ENCODE measurements at regions of chr22 and their contacts with region 1.

Region 1: GRCh38 chr22:41448189-41448808 is 1.7 kb upstream of the TOB2 start:
- H3K4me3 ChIP-seq: peak overlapping the region; percentile 90
- H3K27ac ChIP-seq: peak overlapping the region; percentile 100
- H3K4me1 ChIP-seq: no peaks in the 10 kb centered on the region
- CTCF ChIP-seq: 0 out of 2 replicates have a peak, but pooled peaks have one; percentile 14

Region 2: DNA sequence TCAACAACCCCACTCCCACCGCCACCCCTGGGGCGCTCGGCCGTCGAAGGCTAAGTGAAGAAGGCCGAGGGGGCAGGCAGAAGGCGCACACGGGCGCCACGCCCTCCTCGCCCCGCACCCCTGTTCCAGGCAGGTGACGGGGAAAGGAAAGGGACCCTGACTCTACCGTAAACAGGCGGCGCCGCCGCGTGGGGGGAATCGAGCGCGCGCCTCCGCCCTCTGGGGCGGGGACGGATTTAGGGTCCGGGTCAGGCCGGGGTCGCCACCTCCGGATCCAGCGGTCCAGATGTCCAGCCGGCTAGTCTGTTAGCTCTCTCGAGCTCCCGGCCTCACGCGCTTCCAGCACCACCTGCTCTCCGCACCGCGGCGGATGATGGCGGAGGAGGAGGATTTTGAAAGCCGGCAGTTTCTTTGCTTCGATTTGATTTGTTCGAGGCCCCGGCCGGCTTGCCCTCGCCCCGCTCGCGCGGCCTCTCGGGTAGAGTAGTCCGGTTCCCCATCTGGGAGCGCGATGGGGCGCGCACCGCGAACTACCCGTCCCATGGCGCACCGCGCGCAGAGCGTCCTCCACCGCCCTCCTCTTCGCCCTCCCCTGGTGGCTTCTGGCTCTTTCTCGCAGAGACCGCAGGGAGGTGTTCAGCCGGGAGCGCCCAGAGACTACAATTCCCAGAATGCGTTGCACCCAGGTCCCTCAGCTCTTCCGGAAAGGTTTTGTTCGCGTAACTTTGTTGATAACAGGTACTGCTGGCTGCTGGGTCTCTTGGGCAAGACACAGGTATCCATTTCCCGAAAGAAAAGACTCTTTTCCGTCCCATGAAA is 162.3 kb before region 1 on chr22 and contains the start of gene RANGAP1:
- CTCF ChIA-PET with region 1: interaction called, 3 read pairs
- POLR2A ChIA-PET with region 1: interaction called, 12 read pairs
- H3K4me3 ChIP-seq: peak within 1 kb of the TSS; percentile 95
- H3K27ac ChIP-seq: peak within 1 kb of the TSS; percentile 81
- H3K4me1 ChIP-seq: peaks cover 9% of the 10 kb centered on the region
- CTCF ChIP-seq: peak; percentile 71

Region 3: DNA sequence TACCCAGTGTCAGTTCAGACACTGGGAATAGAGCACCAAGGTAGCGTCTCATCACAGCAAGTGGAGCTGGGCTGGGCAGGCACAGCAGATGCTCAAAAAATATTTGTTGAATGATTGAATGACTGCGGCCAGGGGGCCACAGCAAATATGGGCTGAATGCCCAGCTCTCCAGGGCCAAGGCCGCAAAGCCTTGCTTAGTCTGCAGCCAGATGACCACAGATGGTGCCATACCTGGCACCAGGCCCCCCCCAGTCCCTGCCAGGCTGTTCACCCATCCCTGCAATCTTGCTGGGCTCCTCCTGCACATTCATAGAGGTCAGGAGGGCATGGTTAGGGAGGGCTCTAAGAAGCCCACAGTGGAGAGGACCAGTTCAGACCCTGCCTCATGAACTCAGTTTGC is 114.1 kb before region 1 on chr22:
- CTCF ChIA-PET with region 1: no interaction called
- POLR2A ChIA-PET with region 1: no interaction called
- H3K4me3 ChIP-seq: no peak overlapping the region
- H3K27ac ChIP-seq: no peak overlapping the region
- H3K4me1 ChIP-seq: no peaks in the 10 kb centered on the region
- CTCF ChIP-seq: no peak

Region 4: DNA sequence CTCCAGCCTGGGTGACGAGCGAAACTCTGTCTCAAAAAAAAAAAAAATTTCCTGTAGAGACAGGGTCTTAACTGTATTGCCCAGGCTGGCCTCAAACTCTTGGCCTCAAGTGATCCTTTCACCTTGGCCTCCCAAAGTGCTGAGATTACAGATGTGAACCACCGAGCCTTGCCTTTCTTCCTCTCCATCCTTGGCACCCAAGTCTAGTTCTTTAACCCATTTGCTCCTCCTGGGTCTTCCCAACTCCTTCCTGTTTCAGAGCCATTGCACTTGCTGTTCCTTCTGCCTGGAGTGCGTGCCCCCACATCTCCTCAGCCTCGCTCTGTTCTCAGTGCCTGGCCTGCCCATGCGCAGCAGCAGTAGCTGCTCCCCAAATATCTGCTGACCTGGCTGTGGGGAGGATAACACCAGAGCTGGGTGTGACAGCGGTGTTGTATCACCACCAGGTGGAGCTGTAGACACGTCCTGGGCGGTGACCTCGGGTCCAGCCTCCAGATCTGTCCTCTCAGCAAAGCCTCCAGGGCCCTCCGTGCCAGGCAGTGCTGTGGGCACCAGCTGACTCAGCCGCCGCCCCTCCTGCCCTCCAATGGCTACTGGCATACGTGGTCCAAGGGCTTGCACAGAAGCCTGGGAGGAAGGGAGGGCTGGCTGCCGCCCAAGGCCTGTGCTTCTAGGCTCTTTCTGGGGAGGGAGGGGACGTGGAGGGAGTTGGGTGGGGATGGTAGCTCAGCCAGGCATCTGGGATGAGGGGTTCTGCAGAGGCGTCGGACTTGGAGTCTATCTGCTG is 44.6 kb before region 1 on chr22:
- CTCF ChIA-PET with region 1: interaction called, 33 read pairs
- POLR2A ChIA-PET with region 1: interaction called, 70 read pairs
- H3K4me3 ChIP-seq: no peak overlapping the region
- H3K27ac ChIP-seq: no peak overlapping the region
- H3K4me1 ChIP-seq: no peaks in the 10 kb centered on the region
- CTCF ChIP-seq: peak; percentile 98

Region 5: GRCh38 chr22:41425660-41426365 is 22.5 kb before region 1 on chr22:
- CTCF ChIA-PET with region 1: interaction called, 3 read pairs
- POLR2A ChIA-PET with region 1: interaction called, 10 read pairs
- H3K4me3 ChIP-seq: no peak overlapping the region
- H3K27ac ChIP-seq: peak overlapping the region; percentile 49; the same call in 1 of the 2 replicates
- H3K4me1 ChIP-seq: peaks cover 4% of the 10 kb centered on the region; the same call in 1 of the 2 replicates
- CTCF ChIP-seq: no peak

Region 6: GRCh38 chr22:41468381-41469217 is 20.3 kb after region 1 on chr22 and contains the starts of genes ACO2 and PHF5A:
- CTCF ChIA-PET with region 1: interaction called, 5 read pairs
- POLR2A ChIA-PET with region 1: interaction called, 214 read pairs
- H3K4me3 ChIP-seq: peak within 1 kb of the TSS; percentile 90
- H3K27ac ChIP-seq: peak within 1 kb of the TSS; percentile 84
- H3K4me1 ChIP-seq: no peaks in the 10 kb centered on the region
- CTCF ChIP-seq: no peak

Region 7: GRCh38 chr22:41551877-41552582 is 103.7 kb after region 1 on chr22:
- CTCF ChIA-PET with region 1: no interaction called
- POLR2A ChIA-PET with region 1: no interaction called
- H3K4me3 ChIP-seq: no peak overlapping the region
- H3K27ac ChIP-seq: no peak overlapping the region
- H3K4me1 ChIP-seq: no peaks in the 10 kb centered on the region
- CTCF ChIP-seq: no peak

Region 8: GRCh38 chr22:41621099-41621910 is 173.0 kb after region 1 on chr22 and contains the start of gene XRCC6:
- CTCF ChIA-PET with region 1: no interaction called
- POLR2A ChIA-PET with region 1: interaction called, 12 read pairs
- H3K4me3 ChIP-seq: peak within 1 kb of the TSS; percentile 98
- H3K27ac ChIP-seq: peak within 1 kb of the TSS; percentile 97
- H3K4me1 ChIP-seq: peaks cover 3% of the 10 kb centered on the region; the same call in 1 of the 2 replicates
- CTCF ChIP-seq: no peak

Region 9: DNA sequence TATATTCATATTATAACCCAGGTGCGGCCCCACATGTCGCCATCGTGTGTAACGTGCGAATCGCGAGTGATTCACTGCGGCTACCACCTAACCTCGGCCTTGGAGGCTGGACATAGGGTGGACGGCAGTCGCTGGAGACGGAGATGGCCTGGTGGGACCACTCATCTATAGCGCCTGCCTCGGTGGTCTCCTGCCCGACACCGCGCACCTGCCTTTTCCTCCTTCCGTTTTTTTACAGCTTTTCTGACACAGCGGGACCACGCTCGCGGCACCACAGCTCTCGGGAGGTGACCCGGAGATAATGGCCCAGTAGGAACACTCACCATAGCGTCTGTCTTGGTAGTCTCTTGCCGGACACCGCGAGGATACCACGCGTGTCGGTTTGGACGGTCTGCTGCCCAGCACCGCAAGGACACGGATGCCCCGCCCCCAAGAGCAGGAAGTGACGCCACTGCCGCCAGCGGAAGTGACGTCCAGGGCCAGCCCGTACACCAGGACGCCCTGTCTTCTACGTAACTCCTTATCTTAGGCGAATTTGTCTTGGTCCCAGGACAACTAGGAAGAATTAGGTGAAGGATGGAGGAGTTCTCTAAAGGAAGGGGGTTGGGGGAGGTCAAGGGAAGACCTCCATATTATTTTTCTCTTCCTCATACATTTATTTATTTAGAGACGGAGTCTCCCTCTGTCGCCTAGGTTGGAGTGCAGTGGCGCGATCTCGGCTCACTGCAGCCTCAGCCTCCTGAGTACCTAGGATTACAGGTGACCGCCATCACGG is 233.9 kb after region 1 on chr22:
- CTCF ChIA-PET with region 1: no interaction called
- POLR2A ChIA-PET with region 1: no interaction called
- H3K4me3 ChIP-seq: peak overlapping the region; percentile 81
- H3K27ac ChIP-seq: peak overlapping the region; percentile 66
- H3K4me1 ChIP-seq: peaks cover 4% of the 10 kb centered on the region; the same call in 1 of the 2 replicates
- CTCF ChIP-seq: no peak

Measured in HEK293 (cell line).